Heart right ventricle (tissue), 16 donors: ENCODE measurements at regions of chr17 and their contacts with region 1.

Region 1: DNA sequence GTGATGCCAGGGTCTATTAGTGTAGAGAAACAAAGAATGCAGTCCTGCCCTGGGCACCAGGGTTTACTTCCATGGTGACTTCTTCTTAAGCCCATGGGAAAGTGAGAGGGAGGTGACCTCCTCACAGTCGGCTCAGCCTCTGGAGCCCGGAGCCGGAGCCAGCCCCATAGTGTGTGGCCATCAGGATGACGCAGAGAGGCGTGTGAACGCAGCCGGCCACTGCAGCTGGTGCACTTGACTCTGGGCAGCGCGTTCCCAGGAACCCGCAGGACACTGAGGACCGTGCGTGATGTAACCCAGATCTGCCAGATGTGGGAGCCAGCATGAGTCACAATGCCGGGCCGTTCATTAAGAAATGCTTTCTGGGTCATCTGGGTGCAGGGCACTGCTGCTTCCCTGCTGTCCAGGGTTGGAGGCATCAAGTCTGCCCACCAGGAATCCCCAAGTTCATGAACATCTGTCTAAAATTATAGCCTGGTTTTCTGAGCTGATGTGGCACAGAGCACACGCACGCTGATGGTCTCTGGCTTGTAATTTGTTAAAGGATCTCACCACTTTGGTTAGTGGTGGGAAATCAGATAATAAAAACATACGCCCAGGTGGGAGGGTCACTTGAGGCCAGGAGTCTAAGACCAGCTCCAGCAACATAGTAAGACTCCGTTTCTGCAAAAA is 114.1 kb downstream of the PITPNC1 start:
- DNase-seq: peak; percentile 88 to 89
- ATAC-seq: peak; percentile 92 to 99 (median 95)
- H3K4me3 ChIP-seq: peak overlapping the region in 8 of 10 donors; percentile 8 to 49 (median 38)
- H3K27ac ChIP-seq: peak overlapping the region in 9 of 10 donors; percentile 35 to 81 (median 73)
- H3K4me1 ChIP-seq: peaks cover 0 to 60% (median 47%) of the 10 kb centered on the region in 9 donors
- H3K27me3 ChIP-seq: no peaks in the 10 kb centered on the region
- CTCF ChIP-seq: no peak

Region 2: DNA sequence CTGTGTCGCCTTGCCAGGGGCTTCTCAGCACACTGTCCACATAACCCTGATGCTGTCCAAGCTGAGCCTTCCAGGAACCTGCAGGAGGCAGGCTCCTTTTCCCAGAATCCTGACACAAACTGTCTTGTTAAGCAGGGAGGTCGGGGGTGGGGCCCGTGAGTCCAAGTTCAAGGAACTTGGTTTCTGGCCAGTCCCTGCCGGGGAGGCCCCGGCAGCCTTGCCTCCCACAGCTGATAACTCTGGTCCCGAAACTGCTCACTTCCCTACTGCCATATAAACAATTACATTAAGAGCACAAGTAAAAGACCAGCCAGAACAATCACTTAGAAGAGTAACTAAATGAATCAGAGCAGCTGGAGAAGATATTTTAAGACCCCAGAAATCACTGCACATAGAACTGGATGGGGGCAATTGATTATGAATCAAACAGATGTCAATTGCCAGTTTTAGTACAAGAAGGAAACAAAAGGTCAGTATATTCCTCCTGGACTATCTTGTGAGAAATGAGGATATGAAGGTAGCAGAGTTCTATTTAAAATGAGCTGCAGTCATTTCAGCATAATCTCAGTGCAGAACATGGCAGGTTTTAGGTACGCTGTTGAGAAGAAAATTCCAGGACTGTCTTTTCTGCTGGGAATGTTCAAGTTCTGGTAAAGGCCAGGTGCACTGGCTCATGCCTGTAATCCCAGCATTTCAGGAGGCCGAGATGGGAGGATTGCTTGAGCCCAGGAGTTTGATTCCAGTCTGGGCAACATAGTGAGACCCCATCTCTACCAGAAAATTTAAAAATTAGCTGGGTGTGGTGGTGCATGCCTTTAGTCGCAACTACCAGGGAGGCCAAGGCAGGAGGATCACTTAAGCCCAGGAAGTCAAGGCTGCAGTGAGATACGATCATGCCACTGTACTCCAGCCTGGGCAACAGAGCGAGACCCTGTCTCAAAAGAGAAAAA is 55.7 kb after region 1 on chr17:
- intact Hi-C with region 1: loop called in 3 of 10 experiments (anchors 5 to 10 kb)
- DNase-seq: peak; percentile 54 to 72
- ATAC-seq: peak; percentile 44 to 90 (median 80)
- H3K4me3 ChIP-seq: no peak overlapping the region
- H3K27ac ChIP-seq: peak overlapping the region in 8 of 10 donors; percentile 29 to 67 (median 49)
- H3K4me1 ChIP-seq: peaks cover 0 to 48% (median 32%) of the 10 kb centered on the region in 9 donors
- H3K27me3 ChIP-seq: no peaks in the 10 kb centered on the region
- CTCF ChIP-seq: peak in 3 of 9 donors; percentile 23 to 36 (median 29)